ENCODE measurements at regions of chr11 and their contacts with region 1.

Region 1: DNA sequence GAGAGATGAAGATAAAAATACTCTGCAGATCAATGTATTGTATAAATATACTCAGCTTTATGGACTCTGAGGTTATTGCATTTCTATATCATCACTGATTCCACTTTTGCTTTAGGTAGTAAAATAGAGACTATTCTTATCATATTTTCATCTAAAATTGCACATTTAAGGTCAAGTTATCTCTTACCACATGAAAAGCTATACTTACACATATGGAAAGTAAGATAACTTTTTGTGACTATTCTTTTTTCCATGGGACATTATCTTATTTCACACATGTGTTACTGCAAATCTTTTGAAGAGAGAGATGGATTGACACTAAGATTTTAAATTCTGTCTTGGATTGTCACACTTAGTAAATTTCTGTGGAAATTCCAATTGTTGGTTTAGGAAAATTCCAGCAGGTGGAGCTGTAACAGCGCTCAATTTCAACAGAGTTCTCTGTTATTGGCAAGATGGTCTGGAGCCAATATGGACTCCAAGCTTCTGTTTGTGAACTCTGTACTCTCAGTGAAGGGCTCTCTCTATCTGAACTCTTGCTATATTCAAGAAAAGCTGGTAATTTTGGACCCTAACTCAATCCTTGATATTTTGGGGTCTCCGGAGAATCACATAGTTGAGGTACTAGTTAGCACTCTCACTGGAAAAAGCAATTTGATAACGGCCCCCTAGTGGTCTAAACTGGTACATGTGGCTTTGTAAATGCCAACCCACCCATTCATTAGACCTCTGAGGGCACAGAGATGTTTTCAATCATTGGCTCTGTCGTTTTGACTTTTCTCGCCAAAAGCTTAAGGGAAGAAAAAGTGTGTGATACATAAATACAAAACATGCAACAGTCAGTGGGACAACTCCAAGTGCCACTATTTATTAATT is 429.7 kb downstream of the ETS1 start:
- DNase-seq: peak; percentile 79
- ATAC-seq: peak; percentile 90
- H3K4me3 Mint-ChIP-seq: peak overlapping the region; percentile 63
- H3K27ac Mint-ChIP-seq: peak overlapping the region; percentile 84
- H3K4me1 Mint-ChIP-seq: peaks cover 11% of the 10 kb centered on the region
- H3K27me3 Mint-ChIP-seq: no peaks in the 10 kb centered on the region
- CTCF ChIP-seq: peak; percentile 100

Region 2: GRCh38 chr11:128021349-128022006 is 136.2 kb before region 1 on chr11:
- CTCF ChIA-PET with region 1: interaction called, 17 read pairs
- POLR2A ChIA-PET with region 1: no interaction called
- intact Hi-C with region 1: no loop called
- DNase-seq: no peak
- ATAC-seq: peak; percentile 32
- H3K4me3 Mint-ChIP-seq: no peak overlapping the region
- H3K27ac Mint-ChIP-seq: no peak overlapping the region
- H3K4me1 Mint-ChIP-seq: peaks cover 4% of the 10 kb centered on the region
- H3K27me3 Mint-ChIP-seq: no peaks in the 10 kb centered on the region
- CTCF ChIP-seq: peak; percentile 20

Region 3: GRCh38 chr11:128086794-128087193 is 70.9 kb before region 1 on chr11:
- CTCF ChIA-PET with region 1: interaction called, 14 read pairs
- POLR2A ChIA-PET with region 1: no interaction called
- intact Hi-C with region 1: no loop called
- DNase-seq: no peak
- ATAC-seq: peak; percentile 42
- H3K4me3 Mint-ChIP-seq: no peak overlapping the region
- H3K27ac Mint-ChIP-seq: no peak overlapping the region
- H3K4me1 Mint-ChIP-seq: peaks cover 31% of the 10 kb centered on the region
- H3K27me3 Mint-ChIP-seq: no peaks in the 10 kb centered on the region
- CTCF ChIP-seq: no peak

Region 4: GRCh38 chr11:128146926-128147605 is 10.6 kb before region 1 on chr11:
- CTCF ChIA-PET with region 1: interaction called, 21 read pairs
- POLR2A ChIA-PET with region 1: interaction called, 3 read pairs
- intact Hi-C with region 1: no loop called
- DNase-seq: no peak
- ATAC-seq: no peak
- H3K4me3 Mint-ChIP-seq: no peak overlapping the region
- H3K27ac Mint-ChIP-seq: no peak overlapping the region
- H3K4me1 Mint-ChIP-seq: no peaks in the 10 kb centered on the region
- H3K27me3 Mint-ChIP-seq: no peaks in the 10 kb centered on the region
- CTCF ChIP-seq: no peak

Region 5: GRCh38 chr11:128290106-128290840 is 132.6 kb after region 1 on chr11:
- CTCF ChIA-PET with region 1: interaction called, 17 read pairs
- POLR2A ChIA-PET with region 1: no interaction called
- intact Hi-C with region 1: no loop called
- DNase-seq: peak; percentile 87
- ATAC-seq: peak; percentile 62
- H3K4me3 Mint-ChIP-seq: peak overlapping the region; percentile 83
- H3K27ac Mint-ChIP-seq: peak overlapping the region; percentile 95
- H3K4me1 Mint-ChIP-seq: peaks cover 94% of the 10 kb centered on the region
- H3K27me3 Mint-ChIP-seq: no peaks in the 10 kb centered on the region
- CTCF ChIP-seq: peak; percentile 88

Region 6: GRCh38 chr11:128776424-128777284 is 619.0 kb after region 1 on chr11:
- CTCF ChIA-PET with region 1: interaction called, 11 read pairs
- POLR2A ChIA-PET with region 1: no interaction called
- intact Hi-C with region 1: no loop called
- DNase-seq: peak; percentile 47
- ATAC-seq: peak; percentile 68
- H3K4me3 Mint-ChIP-seq: no peak overlapping the region
- H3K27ac Mint-ChIP-seq: peak overlapping the region; percentile 71
- H3K4me1 Mint-ChIP-seq: peaks cover 40% of the 10 kb centered on the region
- H3K27me3 Mint-ChIP-seq: no peaks in the 10 kb centered on the region
- CTCF ChIP-seq: peak; percentile 49